ENCODE measurements at regions of chr16 and their contacts with region 1.

Region 1: GRCh38 chr16:2023098-2023925 is 3.4 kb upstream of the NHERF2 start:
- DNase-seq: peak; percentile 89
- ATAC-seq: peak; percentile 59
- H3K4me3 ChIP-seq: peak overlapping the region; percentile 62
- H3K27ac ChIP-seq: peak overlapping the region; percentile 39; the same call in 1 of the 2 replicates
- H3K4me1 ChIP-seq: peaks cover 17% of the 10 kb centered on the region
- H3K27me3 ChIP-seq: no peaks in the 10 kb centered on the region; the same call in 1 of the 2 replicates
- CTCF ChIP-seq: peak; percentile 77

Region 2: GRCh38 chr16:1481906-1482835 is 541.1 kb before region 1 on chr16:
- CTCF ChIA-PET with region 1: interaction called, 14 read pairs
- POLR2A ChIA-PET with region 1: no interaction called
- intact Hi-C with region 1: no loop called
- DNase-seq: peak; percentile 87
- ATAC-seq: peak; percentile 97
- H3K4me3 ChIP-seq: no peak overlapping the region
- H3K27ac ChIP-seq: peak overlapping the region; percentile 81
- H3K4me1 ChIP-seq: peaks cover 12% of the 10 kb centered on the region
- H3K27me3 ChIP-seq: no peaks in the 10 kb centered on the region
- CTCF ChIP-seq: no peak

Region 3: DNA sequence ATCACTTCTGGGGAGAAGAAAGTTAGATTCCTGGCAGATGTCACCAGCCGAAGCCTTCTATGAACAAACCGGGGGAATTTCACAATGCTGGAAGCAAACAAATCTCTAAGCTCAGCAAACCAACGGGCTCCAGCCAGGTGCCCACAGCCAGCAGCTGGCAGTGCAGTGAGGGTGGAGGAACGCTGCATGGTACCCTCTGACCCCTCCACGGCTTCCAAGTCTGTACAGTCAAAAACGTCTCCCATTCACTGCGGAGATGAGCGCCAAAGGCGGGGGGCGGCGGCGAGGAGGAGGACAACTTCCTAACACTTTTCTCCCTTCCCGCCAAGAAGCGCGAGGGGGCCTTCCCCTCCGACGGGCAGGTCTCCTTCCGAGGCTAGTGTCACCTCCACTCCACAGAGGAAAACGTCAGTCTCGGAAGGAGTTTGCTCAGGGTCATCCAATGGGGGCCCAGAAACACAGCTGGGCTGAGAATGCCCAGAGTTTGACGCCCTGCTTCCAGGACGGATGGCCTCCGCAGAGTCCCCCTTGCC is 14.6 kb before region 1 on chr16:
- CTCF ChIA-PET with region 1: interaction called, 20 read pairs
- POLR2A ChIA-PET with region 1: interaction called, 9 read pairs
- intact Hi-C with region 1: no loop called
- DNase-seq: peak; percentile 22
- ATAC-seq: no peak
- H3K4me3 ChIP-seq: peak overlapping the region; percentile 94
- H3K27ac ChIP-seq: peak overlapping the region; percentile 64
- H3K4me1 ChIP-seq: peaks cover 25% of the 10 kb centered on the region
- H3K27me3 ChIP-seq: no peaks in the 10 kb centered on the region
- CTCF ChIP-seq: no peak

Region 4: GRCh38 chr16:2056681-2057407 is 33.5 kb after region 1 on chr16:
- CTCF ChIA-PET with region 1: interaction called, 10 read pairs
- POLR2A ChIA-PET with region 1: no interaction called
- intact Hi-C with region 1: loop called (anchors 2 kb)
- DNase-seq: no peak
- ATAC-seq: peak; percentile 77
- H3K4me3 ChIP-seq: no peak overlapping the region
- H3K27ac ChIP-seq: no peak overlapping the region
- H3K4me1 ChIP-seq: no peaks in the 10 kb centered on the region
- H3K27me3 ChIP-seq: no peaks in the 10 kb centered on the region
- CTCF ChIP-seq: peak; percentile 24; the same call in 1 of the 2 replicates

Region 5: DNA sequence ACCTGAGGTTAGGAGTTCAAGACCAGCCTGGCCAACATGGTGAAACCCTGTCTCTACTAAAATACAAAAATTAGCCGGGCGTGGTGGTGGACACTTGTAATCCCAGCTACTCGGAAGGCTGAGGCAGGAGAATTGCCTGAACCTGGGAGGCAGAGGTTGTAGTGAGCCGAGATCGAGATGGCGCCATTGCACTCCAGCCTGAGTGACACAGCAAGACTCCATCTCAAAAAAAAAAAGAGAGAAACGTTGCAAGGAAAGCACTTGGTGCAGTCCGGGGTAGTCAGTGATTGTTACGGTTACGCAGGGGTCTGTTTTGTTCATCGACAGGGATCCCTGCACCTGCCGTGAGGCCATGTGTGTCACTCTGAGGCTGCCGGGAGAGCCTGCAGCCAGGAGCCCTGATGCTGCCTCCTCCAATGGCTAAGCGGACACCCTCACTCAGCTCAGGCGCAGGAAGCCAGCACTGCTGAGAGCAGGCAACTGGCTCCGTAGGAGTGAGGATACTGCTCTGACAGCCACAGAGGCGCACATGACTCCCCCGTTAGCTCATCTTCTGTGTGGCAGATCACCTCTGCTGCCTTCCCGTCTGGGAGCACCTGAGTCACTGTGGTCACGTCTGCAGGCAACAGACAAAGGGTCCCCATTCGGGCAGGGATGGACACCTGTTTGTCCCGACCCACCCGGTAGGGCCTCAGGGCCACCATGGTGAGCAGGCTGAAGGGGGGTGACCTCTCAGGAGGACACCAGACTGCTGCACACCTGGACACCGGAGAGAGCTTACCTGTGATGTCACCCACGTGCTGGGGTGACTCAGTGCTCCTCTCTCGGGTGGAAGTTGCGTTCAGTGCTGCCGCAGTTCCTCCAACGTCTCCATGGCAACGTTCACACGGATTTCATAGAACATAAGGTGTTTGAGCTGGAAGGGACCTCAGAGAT is 119.9 kb after region 1 on chr16:
- CTCF ChIA-PET with region 1: interaction called, 8 read pairs
- POLR2A ChIA-PET with region 1: no interaction called
- intact Hi-C with region 1: loop called (anchors 2 kb)
- DNase-seq: no peak
- ATAC-seq: no peak
- H3K4me3 ChIP-seq: no peak overlapping the region
- H3K27ac ChIP-seq: no peak overlapping the region
- H3K4me1 ChIP-seq: peaks cover 5% of the 10 kb centered on the region; the same call in 1 of the 2 replicates
- H3K27me3 ChIP-seq: no peaks in the 10 kb centered on the region
- CTCF ChIP-seq: no peak

Region 6: DNA sequence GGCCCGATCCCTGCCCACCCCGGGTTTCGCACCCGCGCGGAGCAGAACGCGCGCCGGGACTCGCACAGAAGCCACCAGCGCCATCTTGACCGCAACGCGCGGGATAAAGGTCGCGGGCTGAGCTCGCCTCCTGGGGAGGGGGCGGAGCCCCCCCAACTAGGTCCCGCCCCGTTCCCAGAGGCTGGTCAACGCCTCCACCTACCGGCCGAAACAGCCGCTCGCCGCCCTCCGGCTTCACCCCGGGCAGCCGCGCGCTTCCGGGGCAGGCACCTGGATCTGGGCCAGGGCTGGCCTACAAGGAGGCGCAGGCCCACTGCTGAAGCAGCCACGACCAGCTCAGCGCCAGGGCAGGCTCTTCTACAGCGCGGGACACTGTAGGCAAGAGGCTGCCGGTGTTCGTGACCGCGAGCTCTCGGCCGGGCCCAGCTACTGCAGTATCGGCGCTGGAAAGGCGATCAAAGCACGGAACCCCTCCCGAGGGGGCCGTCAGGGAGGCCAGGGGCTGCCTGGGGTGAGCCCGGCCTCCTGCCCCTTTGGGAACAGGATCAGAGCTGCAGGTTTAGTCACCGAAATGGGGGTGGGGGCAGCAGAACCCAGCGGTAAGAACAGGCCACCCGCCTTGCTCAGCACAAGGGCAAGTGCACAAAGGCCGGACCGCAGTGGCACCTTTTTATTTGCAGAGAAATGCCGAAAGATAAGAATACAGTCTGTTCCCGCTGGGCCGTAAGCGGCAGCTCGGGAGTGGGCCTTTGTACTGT is 228.3 kb after region 1 on chr16 and contains the start of gene ECI1:
- CTCF ChIA-PET with region 1: no interaction called
- POLR2A ChIA-PET with region 1: no interaction called
- intact Hi-C with region 1: no loop called
- DNase-seq: peak; percentile 93
- ATAC-seq: peak; percentile 79
- H3K4me3 ChIP-seq: peak within 1 kb of the TSS; percentile 81
- H3K27ac ChIP-seq: peak within 1 kb of the TSS; percentile 67
- H3K4me1 ChIP-seq: peaks cover 9% of the 10 kb centered on the region
- H3K27me3 ChIP-seq: no peaks in the 10 kb centered on the region
- CTCF ChIP-seq: peak; percentile 49; the same call in 1 of the 2 replicates
- total RNA-seq, gene ECI1: 71.7 and 90.5 TPM in 2 replicates

Measured in PC-3 (cell line).